ENCODE measurements at regions of chr15 and their contacts with region 1.

Region 1: GRCh38 chr15:45522328-45523160 is at the start of gene SLC30A4:
- DNase-seq: no peak
- H3K4me3 ChIP-seq: peak within 1 kb of the TSS; percentile 72 to 96 (median 88)
- H3K27ac ChIP-seq: peak within 1 kb of the TSS; percentile 90 to 94 (median 92)
- H3K4me1 ChIP-seq: peaks cover 13 to 46% (median 40%) of the 10 kb centered on the region in 4 donors
- H3K27me3 ChIP-seq: no peaks in the 10 kb centered on the region
- CTCF ChIP-seq: peak; percentile 40 to 64 (median 54)
- EP300 ChIP-seq: no peak
- POLR2A ChIP-seq: no peak
- total RNA-seq, gene SLC30A4: 9.4 to 14.0 (median 11.6) TPM

Region 2: GRCh38 chr15:45587095-45587860 is 64.7 kb after region 1 on chr15 and contains the start of gene BLOC1S6:
- intact Hi-C with region 1: loop called (anchors 2 kb)
- DNase-seq: peak; percentile 99
- H3K4me3 ChIP-seq: peak within 1 kb of the TSS; percentile 70 to 96 (median 88)
- H3K27ac ChIP-seq: peak within 1 kb of the TSS; percentile 93 to 99 (median 98)
- H3K4me1 ChIP-seq: peaks cover 27 to 60% (median 56%) of the 10 kb centered on the region in 4 donors
- H3K27me3 ChIP-seq: no peaks in the 10 kb centered on the region
- CTCF ChIP-seq: no peak
- EP300 ChIP-seq: no peak
- POLR2A ChIP-seq: no peak
- total RNA-seq, gene BLOC1S6: 37.5 to 58.1 (median 49.2) TPM

Region 3: GRCh38 chr15:45611305-45611704 is 88.8 kb after region 1 on chr15:
- intact Hi-C with region 1: loop called (anchors 5 kb)
- DNase-seq: no peak
- H3K4me3 ChIP-seq: no peak overlapping the region
- H3K27ac ChIP-seq: no peak overlapping the region
- H3K4me1 ChIP-seq: peaks cover 0 to 7% (median 0%) of the 10 kb centered on the region in 4 donors
- H3K27me3 ChIP-seq: no peaks in the 10 kb centered on the region
- CTCF ChIP-seq: peak in 2 of 3 experiments; percentile 26 to 35
- EP300 ChIP-seq: no peak
- POLR2A ChIP-seq: no peak

Measured in esophagus muscularis mucosa (tissue), 4 donors.